Activated CD4-positive, alpha-beta memory T cell treated with anti-CD3 and anti-CD28 coated beads, Interleukin-2, amount 10 ng/mL, durations not matched to agents 7 days and 5 days (primary cell): ENCODE measurements at regions of chr6 and their contacts with region 1.

Region 1: DNA sequence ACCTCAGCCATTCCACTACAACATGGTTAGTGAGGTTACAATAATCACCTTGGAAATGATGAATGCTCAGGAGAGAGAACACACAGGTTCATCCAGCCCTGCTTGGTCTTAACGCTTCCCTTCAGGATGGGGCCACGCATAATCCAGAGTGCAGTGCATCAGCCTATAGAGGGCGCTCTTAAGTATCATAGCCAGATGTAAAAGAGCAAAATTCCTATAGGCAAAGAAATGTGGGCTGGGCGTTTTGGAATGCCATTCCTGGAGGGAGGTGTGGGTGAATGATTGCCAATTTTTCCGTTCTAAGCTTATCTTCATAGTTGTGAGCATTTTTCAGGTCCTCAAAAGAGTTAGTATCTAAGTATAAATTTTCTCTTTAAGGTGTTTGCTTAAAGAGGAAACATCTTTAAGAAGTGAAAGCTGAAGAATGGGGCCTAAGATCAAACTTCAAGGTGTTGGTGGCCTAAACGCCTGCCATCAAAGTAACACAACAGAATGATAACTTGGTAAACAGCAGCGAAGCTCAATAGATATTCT is 1.8 kb downstream of the RIPOR2 start:
- DNase-seq: peak; percentile 61
- H3K4me3 Mint-ChIP-seq: peak overlapping the region; percentile 99
- H3K27ac Mint-ChIP-seq: peak overlapping the region; percentile 98
- H3K4me1 Mint-ChIP-seq: peaks cover 63% of the 10 kb centered on the region
- H3K27me3 Mint-ChIP-seq: no peaks in the 10 kb centered on the region

Region 2: GRCh38 chr6:24494821-24495795 is 438.8 kb before region 1 on chr6 and contains the start of gene ALDH5A1:
- CTCF ChIA-PET with region 1: no interaction called
- POLR2A ChIA-PET with region 1: no interaction called
- DNase-seq: peak; percentile 70
- H3K4me3 Mint-ChIP-seq: peak within 1 kb of the TSS; percentile 71
- H3K27ac Mint-ChIP-seq: no peak within 1 kb of the TSS
- H3K4me1 Mint-ChIP-seq: peaks cover 14% of the 10 kb centered on the region
- H3K27me3 Mint-ChIP-seq: no peaks in the 10 kb centered on the region
- total RNA-seq, gene ALDH5A1: 2.5 to 3.7 TPM

Region 3: DNA sequence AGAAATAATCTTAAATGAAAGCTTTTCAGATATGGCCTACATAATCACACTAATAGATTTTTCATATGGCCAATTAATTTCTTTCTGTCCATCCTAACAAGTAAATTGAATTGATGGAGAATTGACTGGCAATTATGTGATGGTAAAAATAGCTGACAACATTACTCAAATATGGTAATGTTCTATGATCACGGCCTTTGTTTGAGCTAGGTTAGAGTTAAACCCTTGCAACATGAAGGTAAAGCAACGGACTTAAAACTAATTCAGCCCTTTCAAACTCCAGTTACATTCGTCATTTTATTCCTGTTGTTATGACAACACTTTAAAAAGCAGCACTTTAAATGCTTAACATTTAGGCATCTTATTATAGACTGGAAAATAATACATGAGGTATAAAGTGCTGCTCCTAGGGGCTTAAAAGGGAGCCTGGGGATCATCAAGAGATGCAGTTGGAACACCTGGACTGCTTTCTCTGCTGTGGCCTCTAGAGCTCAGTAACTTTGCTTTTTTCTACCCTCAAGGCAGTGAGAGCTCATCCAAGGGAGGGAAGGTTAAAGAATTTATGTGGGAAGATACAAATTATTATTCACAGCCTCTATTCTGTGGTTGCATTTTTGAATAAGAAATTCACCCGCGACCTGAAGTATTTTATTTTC is 45.1 kb before region 1 on chr6:
- CTCF ChIA-PET with region 1: interaction called, 14 read pairs
- POLR2A ChIA-PET with region 1: interaction called, 3 read pairs
- DNase-seq: no peak
- H3K4me3 Mint-ChIP-seq: no peak overlapping the region
- H3K27ac Mint-ChIP-seq: no peak overlapping the region
- H3K4me1 Mint-ChIP-seq: peaks cover 66% of the 10 kb centered on the region
- H3K27me3 Mint-ChIP-seq: no peaks in the 10 kb centered on the region

Region 4: GRCh38 chr6:24919004-24919892 is 14.7 kb before region 1 on chr6:
- CTCF ChIA-PET with region 1: interaction called, 42 read pairs
- POLR2A ChIA-PET with region 1: interaction called, 59 read pairs
- DNase-seq: no peak
- H3K4me3 Mint-ChIP-seq: peak overlapping the region; percentile 25
- H3K27ac Mint-ChIP-seq: peak overlapping the region; percentile 48
- H3K4me1 Mint-ChIP-seq: peaks cover 80% of the 10 kb centered on the region
- H3K27me3 Mint-ChIP-seq: no peaks in the 10 kb centered on the region

Region 5: GRCh38 chr6:24974182-24975171 is 40.5 kb after region 1 on chr6:
- CTCF ChIA-PET with region 1: interaction called, 15 read pairs
- POLR2A ChIA-PET with region 1: interaction called, 141 read pairs
- DNase-seq: peak; percentile 64
- H3K4me3 Mint-ChIP-seq: peak overlapping the region; percentile 32
- H3K27ac Mint-ChIP-seq: peak overlapping the region; percentile 85
- H3K4me1 Mint-ChIP-seq: peaks cover 37% of the 10 kb centered on the region
- H3K27me3 Mint-ChIP-seq: no peaks in the 10 kb centered on the region

Region 6: DNA sequence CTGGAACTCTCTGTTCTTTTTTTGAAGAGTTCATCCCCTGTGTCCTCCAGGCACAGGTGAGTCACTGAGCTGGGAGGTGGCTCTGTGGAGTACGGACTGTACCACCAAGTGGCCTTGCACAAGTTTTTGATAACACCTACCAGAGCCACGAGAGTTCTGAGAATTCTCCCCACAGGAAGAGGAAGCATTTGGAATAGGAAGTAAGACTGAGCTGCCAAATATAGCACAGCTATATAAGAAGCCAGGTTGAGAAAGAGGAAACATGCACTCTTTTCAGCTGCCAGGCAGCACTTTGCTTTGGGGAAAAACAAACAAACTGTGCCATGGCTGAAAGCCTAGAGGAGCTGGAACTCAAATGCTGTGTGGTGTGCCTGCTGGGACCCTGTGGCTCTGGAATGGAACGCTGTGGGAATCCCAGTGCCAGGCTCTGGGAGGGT is 72.6 kb after region 1 on chr6:
- CTCF ChIA-PET with region 1: interaction called, 72 read pairs
- POLR2A ChIA-PET with region 1: interaction called, 120 read pairs
- DNase-seq: peak; percentile 75
- H3K4me3 Mint-ChIP-seq: peak overlapping the region; percentile 50
- H3K27ac Mint-ChIP-seq: peak overlapping the region; percentile 92
- H3K4me1 Mint-ChIP-seq: peaks cover 79% of the 10 kb centered on the region
- H3K27me3 Mint-ChIP-seq: no peaks in the 10 kb centered on the region

Region 7: DNA sequence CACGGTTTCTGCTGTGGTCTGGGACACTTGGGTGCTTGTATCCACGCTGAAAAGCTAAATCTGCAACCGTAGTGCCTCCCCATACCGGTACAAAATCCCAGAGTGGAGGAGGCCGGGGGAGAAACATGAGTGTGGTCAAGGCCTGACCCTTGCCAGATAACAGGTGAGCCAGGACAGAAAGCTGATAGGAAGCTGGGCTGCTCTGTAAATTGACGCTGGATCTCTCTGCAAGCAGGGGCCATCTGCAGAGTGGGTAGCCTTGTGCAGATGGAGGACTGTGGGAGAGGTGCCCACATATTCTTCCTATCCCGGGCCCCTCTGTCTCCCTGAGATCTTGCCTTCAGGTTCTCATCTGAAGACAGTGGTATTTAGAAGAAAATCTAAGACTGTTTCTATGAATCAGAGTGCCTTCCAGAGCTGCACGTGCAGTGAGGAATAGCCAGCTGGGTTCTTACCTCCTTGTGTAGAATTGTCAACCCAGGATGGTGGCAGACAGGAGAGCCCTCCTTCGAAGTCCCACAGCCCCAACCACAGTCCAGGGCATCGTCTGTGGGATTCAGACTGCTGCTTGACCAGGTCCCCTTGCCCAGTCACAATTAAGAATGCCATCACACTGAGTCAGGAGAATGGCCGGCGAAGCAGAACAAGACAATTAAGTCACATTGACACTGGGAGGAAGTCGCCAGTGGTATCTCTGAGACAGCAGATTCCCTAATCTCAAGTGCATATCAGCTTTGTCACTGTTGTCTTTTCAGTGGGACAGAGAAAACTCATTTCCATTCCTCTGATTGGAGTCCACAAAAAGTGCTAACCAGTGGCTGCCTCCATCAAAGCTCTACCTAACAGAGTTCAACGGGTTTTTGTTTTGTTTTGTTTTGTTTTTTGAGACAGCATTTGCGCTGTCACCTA is 101.8 kb after region 1 on chr6:
- CTCF ChIA-PET with region 1: interaction called, 8 read pairs
- POLR2A ChIA-PET with region 1: interaction called, 11 read pairs
- DNase-seq: peak; percentile 45
- H3K4me3 Mint-ChIP-seq: peak overlapping the region; percentile 95
- H3K27ac Mint-ChIP-seq: peak overlapping the region; percentile 95
- H3K4me1 Mint-ChIP-seq: peaks cover 69% of the 10 kb centered on the region
- H3K27me3 Mint-ChIP-seq: no peaks in the 10 kb centered on the region

Region 8: GRCh38 chr6:26031595-26032339 is 1097.8 kb after region 1 on chr6:
- CTCF ChIA-PET with region 1: no interaction called
- POLR2A ChIA-PET with region 1: interaction called, 10 read pairs
- DNase-seq: peak; percentile 92
- H3K4me3 Mint-ChIP-seq: peak overlapping the region; percentile 84
- H3K27ac Mint-ChIP-seq: peak overlapping the region; percentile 100
- H3K4me1 Mint-ChIP-seq: peaks cover 74% of the 10 kb centered on the region
- H3K27me3 Mint-ChIP-seq: peaks cover 4% of the 10 kb centered on the region